ENCODE measurements at regions of chr1 and their contacts with region 1.

Region 1: GRCh38 chr1:29550119-29550898 is 314.0 kb downstream of the PTPRU start:
- DNase-seq: peak; percentile 73 to 84
- H3K4me3 ChIP-seq: no peak overlapping the region
- H3K27ac ChIP-seq: peak overlapping the region in 3 of 5 donors; percentile 39 to 65 (median 56)
- H3K4me1 ChIP-seq: peaks cover 0 to 9% (median 6%) of the 10 kb centered on the region in 4 donors
- H3K27me3 ChIP-seq: peaks cover 0 to 16% (median 0%) of the 10 kb centered on the region in 3 donors
- CTCF ChIP-seq: no peak
- EP300 ChIP-seq: no peak
- POLR2A ChIP-seq: no peak

Region 2: GRCh38 chr1:30652152-30652841 is 1102.0 kb after region 1 on chr1:
- intact Hi-C with region 1: loop called (anchors 10 kb)
- DNase-seq: peak in 1 of 2 donors; percentile 46
- H3K4me3 ChIP-seq: no peak overlapping the region
- H3K27ac ChIP-seq: no peak overlapping the region
- H3K4me1 ChIP-seq: peaks cover 0 to 9% (median 7%) of the 10 kb centered on the region in 4 donors
- H3K27me3 ChIP-seq: peaks cover 0 to 75% (median 0%) of the 10 kb centered on the region in 3 donors
- CTCF ChIP-seq: no peak
- EP300 ChIP-seq: no peak
- POLR2A ChIP-seq: no peak

Measured in stomach (tissue), 19 donors.